PC-3 (cell line): ENCODE measurements at regions of chr7 and their contacts with region 1.

Region 1: DNA sequence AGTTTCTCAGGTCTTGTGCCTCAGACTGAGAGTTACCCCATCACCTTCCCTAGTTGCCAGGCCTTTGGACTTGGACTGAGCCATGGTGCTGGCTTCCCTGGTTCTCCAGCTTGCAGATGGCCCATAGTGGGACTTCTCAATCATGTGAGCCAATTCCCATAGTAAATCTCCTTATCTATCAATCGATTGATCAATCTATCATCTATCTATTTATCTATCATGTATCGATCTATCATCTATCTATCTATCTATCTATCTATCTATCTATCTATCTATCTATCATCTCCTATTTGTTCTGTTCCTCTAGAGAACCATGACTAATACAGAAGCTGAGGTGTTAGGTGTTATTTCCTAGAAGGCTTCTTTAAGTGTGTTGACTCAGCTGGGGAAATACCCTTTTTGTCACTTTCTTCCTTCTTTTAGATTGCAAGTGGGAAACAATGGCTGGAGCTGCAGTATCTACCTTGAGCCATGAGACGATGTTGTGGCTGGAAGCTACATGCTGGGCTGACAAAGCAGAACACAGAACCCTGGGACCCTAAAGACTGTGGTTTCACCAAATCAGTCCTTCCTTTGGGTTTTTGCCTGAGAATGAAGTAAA is 234.7 kb upstream of the GLI3 start:
- DNase-seq: no peak
- ATAC-seq: no peak; the same call in 1 of the 2 replicates
- H3K4me3 ChIP-seq: no peak overlapping the region
- H3K27ac ChIP-seq: no peak overlapping the region
- H3K4me1 ChIP-seq: no peaks in the 10 kb centered on the region
- H3K27me3 ChIP-seq: no peaks in the 10 kb centered on the region
- CTCF ChIP-seq: no peak

Region 2: DNA sequence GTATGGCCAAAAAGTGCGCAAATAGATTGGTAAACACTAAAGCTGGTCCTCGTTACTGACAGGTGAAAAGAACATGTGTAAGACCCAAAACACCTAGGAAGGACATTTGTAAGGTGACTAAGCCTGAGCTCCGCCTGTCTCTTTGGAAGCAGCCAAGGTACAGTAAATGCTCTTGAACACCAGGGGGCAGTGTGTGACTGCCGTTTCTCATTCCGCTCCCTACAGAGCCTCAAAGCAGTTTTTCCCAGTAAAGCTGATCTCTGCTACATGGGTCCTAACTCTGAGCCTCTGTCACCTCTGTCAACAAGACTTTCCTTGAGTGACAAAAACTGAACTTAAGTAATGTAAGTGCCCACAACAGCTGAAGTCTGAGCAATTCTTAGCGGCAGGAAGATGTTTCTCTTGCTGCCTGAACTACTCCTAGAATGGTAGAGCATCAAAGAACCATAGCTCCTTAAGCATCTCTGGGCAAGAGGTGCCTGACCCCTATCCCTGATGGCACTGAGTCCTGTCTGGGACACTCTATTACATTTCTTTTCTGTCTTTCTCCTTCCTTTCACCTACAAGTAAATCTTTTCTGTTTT is 530.8 kb before region 1 on chr7:
- CTCF ChIA-PET with region 1: no interaction called
- POLR2A ChIA-PET with region 1: no interaction called
- intact Hi-C with region 1: no loop called
- DNase-seq: peak; percentile 87
- ATAC-seq: peak; percentile 70
- H3K4me3 ChIP-seq: no peak overlapping the region
- H3K27ac ChIP-seq: no peak overlapping the region
- H3K4me1 ChIP-seq: peaks cover 7% of the 10 kb centered on the region; the same call in 1 of the 2 replicates
- H3K27me3 ChIP-seq: no peaks in the 10 kb centered on the region
- CTCF ChIP-seq: peak; percentile 85

Region 3: GRCh38 chr7:42350801-42351200 is 120.9 kb before region 1 on chr7:
- CTCF ChIA-PET with region 1: no interaction called
- POLR2A ChIA-PET with region 1: interaction called, 10 read pairs
- intact Hi-C with region 1: no loop called
- DNase-seq: peak; percentile 37
- ATAC-seq: no peak
- H3K4me3 ChIP-seq: no peak overlapping the region
- H3K27ac ChIP-seq: no peak overlapping the region
- H3K4me1 ChIP-seq: peaks cover 5% of the 10 kb centered on the region; the same call in 1 of the 2 replicates
- H3K27me3 ChIP-seq: no peaks in the 10 kb centered on the region
- CTCF ChIP-seq: no peak

Region 4: DNA sequence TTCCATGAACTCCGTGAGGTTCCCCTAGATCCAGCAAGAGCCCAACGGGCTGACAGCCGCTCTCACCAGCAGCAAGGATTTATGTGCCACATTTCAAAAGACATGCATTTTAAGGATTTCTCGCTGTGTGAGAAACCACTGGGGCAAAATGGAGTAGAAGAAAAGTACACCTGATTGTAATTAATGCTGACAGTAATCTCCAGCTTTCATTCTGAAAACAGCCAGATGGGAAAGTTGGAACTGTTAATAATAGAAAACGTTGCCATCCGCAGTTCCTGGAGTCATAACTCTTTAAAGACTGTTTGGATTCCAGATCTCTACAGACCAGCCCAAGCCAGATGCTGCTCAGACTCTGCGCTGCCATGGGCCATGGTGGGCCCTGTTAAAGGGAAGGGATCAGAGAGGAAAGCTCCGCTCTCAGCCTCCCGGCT is 17.7 kb before region 1 on chr7:
- CTCF ChIA-PET with region 1: no interaction called
- POLR2A ChIA-PET with region 1: no interaction called
- intact Hi-C with region 1: no loop called
- DNase-seq: no peak
- ATAC-seq: no peak
- H3K4me3 ChIP-seq: no peak overlapping the region
- H3K27ac ChIP-seq: no peak overlapping the region
- H3K4me1 ChIP-seq: peaks cover 10% of the 10 kb centered on the region; the same call in 1 of the 2 replicates
- H3K27me3 ChIP-seq: no peaks in the 10 kb centered on the region
- CTCF ChIP-seq: no peak